A673 (cell line): ENCODE measurements at regions of chr17 and their contacts with region 1.

Region 1: DNA sequence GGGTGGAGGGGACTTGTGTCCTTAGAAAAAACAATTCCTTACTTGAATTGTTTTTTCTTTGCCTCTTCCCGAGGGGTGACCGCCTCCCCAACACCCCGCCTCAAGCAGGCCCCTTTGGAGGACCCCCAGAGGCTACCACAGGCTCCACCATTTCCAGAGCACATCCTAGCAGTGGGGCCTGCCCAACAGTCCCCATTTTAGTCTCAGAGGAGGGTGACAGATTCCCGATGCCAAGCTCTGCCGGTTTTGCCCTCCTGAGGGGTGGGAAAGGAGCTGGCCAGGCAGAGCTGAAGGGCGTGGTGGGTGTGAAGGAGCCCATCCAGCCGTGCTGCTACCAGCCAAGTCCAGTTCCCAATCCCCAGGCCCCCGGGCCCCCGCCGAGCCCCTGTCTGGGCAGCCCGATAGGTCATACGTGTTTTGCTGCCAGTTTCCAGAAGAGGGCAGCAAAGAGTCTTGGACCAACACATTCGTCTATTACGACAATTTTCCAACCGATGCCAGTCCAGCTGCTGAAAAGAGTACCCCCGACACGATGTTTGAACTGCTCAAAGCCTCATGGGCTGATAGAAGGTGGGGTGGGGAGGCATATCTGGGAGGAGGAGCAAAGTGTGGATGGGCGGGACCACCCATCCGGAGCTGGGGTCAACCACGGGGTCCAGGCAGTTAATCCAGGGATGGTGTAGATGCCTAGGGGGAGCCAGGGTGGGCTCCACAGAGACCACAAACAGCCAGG is 18.8 kb upstream of the GAA start:
- DNase-seq: peak; percentile 84
- H3K4me3 ChIP-seq: peak overlapping the region; percentile 27
- H3K27ac ChIP-seq: no peak overlapping the region
- H3K4me1 ChIP-seq: no peaks in the 10 kb centered on the region
- H3K27me3 ChIP-seq: no peaks in the 10 kb centered on the region
- CTCF ChIP-seq: peak; percentile 88

Region 2: GRCh38 chr17:79532107-79532790 is 550.3 kb before region 1 on chr17:
- CTCF ChIA-PET with region 1: no interaction called
- POLR2A ChIA-PET with region 1: no interaction called
- intact Hi-C with region 1: no loop called
- DNase-seq: no peak
- H3K4me3 ChIP-seq: no peak overlapping the region
- H3K27ac ChIP-seq: no peak overlapping the region
- H3K4me1 ChIP-seq: no peaks in the 10 kb centered on the region
- H3K27me3 ChIP-seq: peaks cover 76% of the 10 kb centered on the region
- CTCF ChIP-seq: no peak

Region 3: DNA sequence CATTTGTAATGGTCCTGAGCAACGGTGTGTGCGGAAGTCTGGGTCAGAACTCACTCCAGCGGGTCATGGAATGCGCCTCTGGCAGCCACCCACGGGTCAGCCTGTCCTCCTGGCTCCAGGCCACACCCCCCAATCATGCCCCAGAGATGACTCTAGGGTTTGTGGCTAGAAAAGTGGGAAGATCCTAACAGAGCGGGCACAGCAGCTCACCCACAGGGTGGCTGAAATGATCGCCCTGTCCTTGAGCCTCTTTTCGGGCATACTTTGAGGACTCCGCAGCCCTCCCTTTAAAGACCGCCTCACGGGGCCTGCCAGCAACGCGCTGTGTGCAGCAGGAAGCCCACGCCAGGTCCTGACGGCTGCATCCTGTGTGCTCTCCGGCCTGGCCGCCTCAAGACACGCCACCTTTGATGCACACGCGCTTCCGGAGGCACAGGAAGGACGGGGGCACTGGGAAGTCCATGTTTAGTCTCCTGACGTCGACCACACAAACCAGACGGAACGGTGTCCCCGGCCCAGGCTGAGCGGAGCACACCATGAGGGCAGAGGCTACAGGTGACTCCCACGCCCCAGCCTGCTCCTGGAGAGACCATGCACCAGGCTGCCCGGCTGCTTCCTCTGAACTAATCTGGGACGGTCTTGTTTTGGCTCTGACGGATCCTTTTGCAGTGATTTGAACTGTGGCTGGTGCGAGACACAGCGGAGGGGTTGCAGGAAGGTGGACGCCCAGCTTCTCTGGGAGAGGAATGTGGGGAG is 139.8 kb before region 1 on chr17:
- CTCF ChIA-PET with region 1: no interaction called
- POLR2A ChIA-PET with region 1: no interaction called
- intact Hi-C with region 1: no loop called
- DNase-seq: no peak
- H3K4me3 ChIP-seq: no peak overlapping the region
- H3K27ac ChIP-seq: no peak overlapping the region
- H3K4me1 ChIP-seq: peaks cover 7% of the 10 kb centered on the region
- H3K27me3 ChIP-seq: no peaks in the 10 kb centered on the region
- CTCF ChIP-seq: no peak

Region 4: GRCh38 chr17:80045703-80046102 is 36.9 kb before region 1 on chr17:
- CTCF ChIA-PET with region 1: no interaction called
- POLR2A ChIA-PET with region 1: no interaction called
- intact Hi-C with region 1: no loop called
- DNase-seq: no peak
- H3K4me3 ChIP-seq: no peak overlapping the region
- H3K27ac ChIP-seq: no peak overlapping the region
- H3K4me1 ChIP-seq: no peaks in the 10 kb centered on the region
- H3K27me3 ChIP-seq: no peaks in the 10 kb centered on the region
- CTCF ChIP-seq: no peak

Region 5: GRCh38 chr17:80182118-80182844 is 99.7 kb after region 1 on chr17:
- CTCF ChIA-PET with region 1: interaction called, 13 read pairs
- POLR2A ChIA-PET with region 1: no interaction called
- intact Hi-C with region 1: no loop called
- DNase-seq: no peak
- H3K4me3 ChIP-seq: no peak overlapping the region
- H3K27ac ChIP-seq: no peak overlapping the region
- H3K4me1 ChIP-seq: no peaks in the 10 kb centered on the region
- H3K27me3 ChIP-seq: no peaks in the 10 kb centered on the region
- CTCF ChIP-seq: no peak

Region 6: DNA sequence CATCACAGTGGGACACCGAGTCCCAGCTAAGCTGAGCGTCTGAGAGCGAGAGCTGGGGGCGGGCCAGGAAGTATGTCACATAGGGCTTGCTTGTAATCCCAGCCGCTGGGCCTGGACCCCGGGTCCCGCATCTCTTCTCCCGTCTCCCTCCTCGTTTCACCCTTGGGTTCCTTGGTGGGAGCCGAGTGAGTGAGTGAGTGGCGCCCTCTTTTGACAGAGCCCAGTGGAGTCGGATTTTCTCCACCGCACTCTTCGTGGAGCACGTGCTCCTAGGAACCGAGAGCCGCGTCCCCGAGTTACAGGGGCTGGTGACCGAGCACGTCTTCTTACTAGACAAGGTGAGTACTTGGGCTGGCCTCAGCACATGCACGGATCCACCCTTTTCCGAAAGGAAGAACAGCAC is 281.6 kb after region 1 on chr17:
- CTCF ChIA-PET with region 1: interaction called, 7 read pairs
- POLR2A ChIA-PET with region 1: no interaction called
- intact Hi-C with region 1: loop called (anchors 5 kb)
- DNase-seq: peak; percentile 59
- H3K4me3 ChIP-seq: no peak overlapping the region
- H3K27ac ChIP-seq: no peak overlapping the region
- H3K4me1 ChIP-seq: no peaks in the 10 kb centered on the region
- H3K27me3 ChIP-seq: no peaks in the 10 kb centered on the region
- CTCF ChIP-seq: peak; percentile 64